Activated CD4-positive, alpha-beta T cell treated with anti-CD3 and anti-CD28 coated beads for 36 hours (primary cell): ENCODE measurements at regions of chrX and their contacts with region 1.

Region 1: GRCh38 chrX:38192007-38192810 is 28.5 kb downstream of the SRPX start:
- DNase-seq: peak; percentile 10
- ATAC-seq: no peak
- H3K4me3 Mint-ChIP-seq: no peak overlapping the region
- H3K27ac Mint-ChIP-seq: no peak overlapping the region
- H3K4me1 Mint-ChIP-seq: no peaks in the 10 kb centered on the region
- H3K27me3 Mint-ChIP-seq: peaks cover 2% of the 10 kb centered on the region

Region 2: GRCh38 chrX:38095971-38096529 is 96.2 kb before region 1 on chrX:
- CTCF ChIA-PET with region 1: no interaction called
- POLR2A ChIA-PET with region 1: no interaction called
- intact Hi-C with region 1: no loop called
- DNase-seq: no peak
- ATAC-seq: no peak
- H3K4me3 Mint-ChIP-seq: no peak overlapping the region
- H3K27ac Mint-ChIP-seq: no peak overlapping the region
- H3K4me1 Mint-ChIP-seq: no peaks in the 10 kb centered on the region
- H3K27me3 Mint-ChIP-seq: no peaks in the 10 kb centered on the region

Region 3: GRCh38 chrX:38293741-38294140 is 101.5 kb after region 1 on chrX:
- CTCF ChIA-PET with region 1: no interaction called
- POLR2A ChIA-PET with region 1: no interaction called
- intact Hi-C with region 1: no loop called
- DNase-seq: no peak
- ATAC-seq: no peak
- H3K4me3 Mint-ChIP-seq: no peak overlapping the region
- H3K27ac Mint-ChIP-seq: no peak overlapping the region
- H3K4me1 Mint-ChIP-seq: no peaks in the 10 kb centered on the region
- H3K27me3 Mint-ChIP-seq: no peaks in the 10 kb centered on the region

Region 4: GRCh38 chrX:38335382-38335781 is 143.2 kb after region 1 on chrX:
- CTCF ChIA-PET with region 1: no interaction called
- POLR2A ChIA-PET with region 1: no interaction called
- intact Hi-C with region 1: loop called in 1 of 2 experiments (anchors 10 kb)
- DNase-seq: no peak
- ATAC-seq: no peak
- H3K4me3 Mint-ChIP-seq: no peak overlapping the region
- H3K27ac Mint-ChIP-seq: no peak overlapping the region
- H3K4me1 Mint-ChIP-seq: no peaks in the 10 kb centered on the region
- H3K27me3 Mint-ChIP-seq: no peaks in the 10 kb centered on the region